ENCODE measurements at regions of chr17 and their contacts with region 1.

Region 1: GRCh38 chr17:12256380-12256995 is 235.8 kb downstream of the MAP2K4 start:
- DNase-seq: no peak
- ATAC-seq: no peak
- H3K4me3 Mint-ChIP-seq: no peak overlapping the region
- H3K27ac Mint-ChIP-seq: no peak overlapping the region
- H3K4me1 Mint-ChIP-seq: no peaks in the 10 kb centered on the region
- H3K27me3 Mint-ChIP-seq: no peaks in the 10 kb centered on the region
- CTCF ChIP-seq: peak; percentile 77

Region 2: DNA sequence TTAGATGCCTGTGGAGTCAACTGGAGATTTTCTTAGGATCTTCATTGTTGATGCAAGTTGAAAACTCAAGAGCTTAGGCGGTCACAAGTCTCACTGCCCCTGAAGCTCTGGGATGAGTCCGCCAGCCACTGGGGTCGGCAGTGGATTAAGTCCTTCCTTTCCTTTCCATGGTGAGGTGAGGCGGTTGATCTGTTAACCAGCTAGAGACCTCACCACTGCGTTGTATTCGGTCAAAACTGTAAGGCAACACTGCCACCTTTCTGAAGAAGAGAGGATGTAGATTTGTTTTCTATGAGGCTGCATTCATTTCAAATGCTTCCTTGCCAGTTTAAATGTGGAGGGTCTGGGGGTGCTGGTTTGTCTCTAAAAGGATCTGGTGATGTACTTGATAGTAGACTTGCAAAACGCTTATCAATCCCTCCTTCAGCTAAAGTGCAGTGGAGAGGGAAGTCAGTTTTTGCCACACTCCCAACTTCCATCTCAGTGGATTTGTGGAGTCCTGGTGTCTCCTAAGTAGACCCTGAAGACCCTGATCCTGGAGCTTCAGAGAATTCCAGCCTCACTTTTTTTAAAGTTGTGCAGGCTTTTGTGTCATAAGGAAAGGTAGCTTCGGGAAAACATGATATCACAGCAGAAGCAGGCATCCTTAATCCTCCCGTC is 410.9 kb after region 1 on chr17:
- CTCF ChIA-PET with region 1: interaction called, 20 read pairs
- POLR2A ChIA-PET with region 1: no interaction called
- DNase-seq: peak; percentile 42
- ATAC-seq: peak; percentile 43
- H3K4me3 Mint-ChIP-seq: peak overlapping the region; percentile 20; the same call in 1 of the 2 replicates
- H3K27ac Mint-ChIP-seq: no peak overlapping the region
- H3K4me1 Mint-ChIP-seq: peaks cover 10% of the 10 kb centered on the region; the same call in 1 of the 2 replicates
- H3K27me3 Mint-ChIP-seq: peaks cover 39% of the 10 kb centered on the region
- CTCF ChIP-seq: peak; percentile 23; the same call in 1 of the 2 replicates